CD14-positive monocyte (primary cell): ENCODE measurements at regions of chr6 and their contacts with region 1.

Region 1: GRCh38 chr6:109772961-109773431 is 81.9 kb downstream of the FIG4 start:
- DNase-seq: peak in 2 of 3 donors; percentile 7
- H3K4me3 ChIP-seq: peak overlapping the region in 1 of 3 experiments; percentile 39
- H3K4me3 Mint-ChIP-seq: no peak overlapping the region
- H3K27ac ChIP-seq: peak overlapping the region; percentile 90 to 94
- H3K27ac Mint-ChIP-seq: peak overlapping the region; percentile 95 to 100 (median 99)
- H3K4me1 ChIP-seq: peaks cover 55 to 63% of the 10 kb centered on the region in 2 donors
- H3K4me1 Mint-ChIP-seq: peaks cover 52% of the 10 kb centered on the region
- H3K27me3 ChIP-seq: no peaks in the 10 kb centered on the region
- H3K27me3 Mint-ChIP-seq: peaks cover 0 to 1% (median 0%) of the 10 kb centered on the region in 3 donors
- CTCF ChIP-seq: no peak

Region 2: DNA sequence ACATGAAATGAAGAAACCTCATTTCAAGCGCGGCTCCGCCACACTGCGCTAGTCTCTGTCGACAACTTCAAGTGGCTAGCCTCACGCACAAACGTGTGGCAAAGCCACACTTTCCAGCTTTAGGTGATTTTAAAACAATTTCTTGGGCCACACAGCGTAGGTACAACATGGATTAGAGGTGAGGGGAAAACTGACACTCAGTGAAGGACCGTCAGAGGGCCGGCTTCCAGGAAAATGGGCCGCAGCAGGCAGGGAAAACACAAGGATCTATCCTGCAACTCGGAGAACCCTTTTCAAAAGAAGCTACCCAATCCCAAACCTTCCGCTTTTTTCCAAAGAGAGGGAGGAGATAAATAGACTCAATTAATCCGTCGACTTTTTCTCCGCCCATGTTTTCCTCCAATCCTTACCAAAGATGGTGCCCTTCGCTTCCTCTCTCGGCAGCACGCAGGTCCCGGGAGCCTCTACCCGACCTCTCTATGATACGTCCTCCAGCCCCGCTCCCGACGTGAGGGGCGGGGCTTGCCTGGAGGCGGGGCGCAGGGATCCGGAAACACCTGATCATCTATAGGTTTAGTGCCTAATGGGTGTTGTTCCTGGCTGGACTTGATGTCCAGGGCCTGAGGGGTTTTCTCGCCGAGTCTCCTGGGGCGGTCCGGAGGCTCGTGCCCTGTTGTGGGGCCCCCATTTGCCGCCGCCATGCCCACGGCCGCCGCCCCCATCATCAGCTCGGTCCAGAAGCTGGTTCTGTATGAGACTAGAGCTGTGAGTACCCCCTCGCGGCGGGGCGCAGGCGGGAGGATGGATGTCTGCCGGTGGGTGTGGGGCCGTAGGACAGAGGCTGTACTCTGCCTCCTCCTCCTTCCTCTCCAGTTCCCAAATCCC is 82.0 kb before region 1 on chr6 and contains the starts of genes AK9 and FIG4:
- intact Hi-C with region 1: loop called in 1 of 2 experiments (anchors 5 kb)
- DNase-seq: peak; percentile 84 to 92 (median 85)
- H3K4me3 ChIP-seq: peak within 1 kb of the TSS; percentile 76 to 96 (median 95)
- H3K4me3 Mint-ChIP-seq: peak within 1 kb of the TSS; percentile 87 to 95
- H3K27ac ChIP-seq: peak within 1 kb of the TSS; percentile 82 to 96
- H3K27ac Mint-ChIP-seq: peak within 1 kb of the TSS; percentile 92 to 96 (median 93)
- H3K4me1 ChIP-seq: peaks cover 38 to 53% of the 10 kb centered on the region in 2 donors
- H3K4me1 Mint-ChIP-seq: peaks cover 55% of the 10 kb centered on the region
- H3K27me3 ChIP-seq: no peaks in the 10 kb centered on the region
- H3K27me3 Mint-ChIP-seq: peaks cover 0 to 4% (median 0%) of the 10 kb centered on the region in 3 donors
- CTCF ChIP-seq: no peak
- polyA plus RNA-seq, gene AK9: 2.6 to 3.1 (median 2.8) TPM
- polyA plus RNA-seq, gene FIG4: 27.2 to 65.3 (median 53.7) TPM

Region 3: GRCh38 chr6:109816452-109817374 is 43.7 kb after region 1 on chr6:
- intact Hi-C with region 1: no loop called
- DNase-seq: no peak
- H3K4me3 ChIP-seq: no peak overlapping the region
- H3K4me3 Mint-ChIP-seq: no peak overlapping the region
- H3K27ac ChIP-seq: no peak overlapping the region
- H3K27ac Mint-ChIP-seq: no peak overlapping the region
- H3K4me1 ChIP-seq: no peaks in the 10 kb centered on the region
- H3K4me1 Mint-ChIP-seq: peaks cover 5% of the 10 kb centered on the region
- H3K27me3 ChIP-seq: no peaks in the 10 kb centered on the region
- H3K27me3 Mint-ChIP-seq: peaks cover 0 to 2% (median 0%) of the 10 kb centered on the region in 3 donors
- CTCF ChIP-seq: no peak

Region 4: GRCh38 chr6:109892436-109893435 is 119.7 kb after region 1 on chr6:
- intact Hi-C with region 1: loop called in 1 of 2 experiments (anchors 5 kb)
- DNase-seq: peak in 2 of 3 donors; percentile 7 to 12
- H3K4me3 ChIP-seq: peak overlapping the region in 1 of 3 experiments; percentile 54
- H3K4me3 Mint-ChIP-seq: peak overlapping the region; percentile 4 to 64
- H3K27ac ChIP-seq: peak overlapping the region; percentile 96 to 97
- H3K27ac Mint-ChIP-seq: peak overlapping the region; percentile 94 to 99 (median 96)
- H3K4me1 ChIP-seq: peaks cover 58 to 71% of the 10 kb centered on the region in 2 donors
- H3K4me1 Mint-ChIP-seq: peaks cover 67% of the 10 kb centered on the region
- H3K27me3 ChIP-seq: no peaks in the 10 kb centered on the region
- H3K27me3 Mint-ChIP-seq: peaks cover 0 to 3% (median 0%) of the 10 kb centered on the region in 3 donors
- CTCF ChIP-seq: no peak

Region 5: DNA sequence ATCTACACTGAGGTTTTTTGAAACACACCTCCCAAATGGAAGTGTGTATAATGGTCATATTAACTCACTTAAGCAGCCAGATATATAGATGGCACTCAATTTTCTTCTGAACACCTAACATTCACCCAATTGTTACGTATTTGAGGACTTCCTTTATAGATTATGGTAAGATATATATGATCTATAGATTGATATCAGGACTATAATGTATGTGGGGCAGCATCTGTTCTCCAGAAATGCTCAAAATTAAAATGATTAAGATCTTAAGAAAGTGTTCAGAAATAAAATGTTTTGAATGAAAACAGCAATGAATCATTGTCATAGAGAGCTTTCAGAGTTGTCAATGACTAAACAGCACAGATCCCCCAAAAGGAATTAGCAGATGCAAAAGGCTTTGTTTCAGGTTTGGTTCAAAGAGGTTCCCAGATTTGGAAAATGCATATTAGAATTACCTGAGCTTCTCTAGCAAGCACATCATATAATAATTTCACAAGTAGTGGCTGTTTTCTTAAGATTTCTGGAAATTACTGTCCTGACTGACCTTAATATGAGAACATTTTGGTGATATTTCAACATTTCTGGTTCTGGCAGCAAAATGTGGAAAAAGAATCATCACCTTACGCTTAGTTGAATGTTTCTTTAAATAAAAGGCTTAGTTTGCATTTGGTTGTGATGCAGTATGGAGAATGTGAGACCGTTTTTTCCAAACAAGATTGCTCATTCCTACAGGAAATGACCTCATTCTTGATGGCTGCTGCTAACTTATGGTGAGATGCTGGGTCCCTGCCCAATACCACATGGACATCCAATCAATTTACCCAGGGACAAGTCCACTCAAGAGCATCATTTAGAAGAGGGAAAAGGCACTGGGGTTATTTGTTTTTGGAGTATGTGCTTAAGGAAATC is 1801.1 kb after region 1 on chr6:
- intact Hi-C with region 1: loop called in 1 of 2 experiments (anchors 10 kb)
- DNase-seq: peak; percentile 33 to 66 (median 46)
- H3K4me3 ChIP-seq: no peak overlapping the region
- H3K4me3 Mint-ChIP-seq: no peak overlapping the region
- H3K27ac ChIP-seq: peak overlapping the region in 1 of 2 donors; percentile 91
- H3K27ac Mint-ChIP-seq: peak overlapping the region; percentile 51 to 97 (median 95)
- H3K4me1 ChIP-seq: peaks cover 24 to 29% of the 10 kb centered on the region in 2 donors
- H3K4me1 Mint-ChIP-seq: peaks cover 32% of the 10 kb centered on the region
- H3K27me3 ChIP-seq: no peaks in the 10 kb centered on the region
- H3K27me3 Mint-ChIP-seq: no peaks in the 10 kb centered on the region
- CTCF ChIP-seq: no peak